ENCODE measurements at regions of chr1 and their contacts with region 1.

Region 1: GRCh38 chr1:85607126-85607912 is 26.8 kb downstream of the CCN1 start:
- DNase-seq: peak; percentile 95 to 100
- H3K4me3 ChIP-seq: peak overlapping the region; percentile 13; the same call in 1 of the 2 replicates
- H3K27ac ChIP-seq: peak overlapping the region; percentile 85
- H3K4me1 ChIP-seq: peaks cover 58% of the 10 kb centered on the region
- H3K27me3 ChIP-seq: no peaks in the 10 kb centered on the region
- CTCF ChIP-seq: no peak

Region 2: GRCh38 chr1:85276215-85276977 is 330.9 kb before region 1 on chr1 and contains the start of gene BCL10:
- CTCF ChIA-PET with region 1: no interaction called
- POLR2A ChIA-PET with region 1: no interaction called
- intact Hi-C with region 1: loop called (anchors 1 kb)
- DNase-seq: peak; percentile 98 to 99
- H3K4me3 ChIP-seq: peak within 1 kb of the TSS; percentile 92
- H3K27ac ChIP-seq: peak within 1 kb of the TSS; percentile 86
- H3K4me1 ChIP-seq: peaks cover 54% of the 10 kb centered on the region
- H3K27me3 ChIP-seq: no peaks in the 10 kb centered on the region
- CTCF ChIP-seq: no peak
- total RNA-seq, gene BCL10: 30.4 and 32.0 TPM in 2 replicates

Region 3: GRCh38 chr1:85328713-85329376 is 278.5 kb before region 1 on chr1:
- CTCF ChIA-PET with region 1: no interaction called
- POLR2A ChIA-PET with region 1: interaction called, 3 read pairs
- intact Hi-C with region 1: loop called (anchors 1 kb)
- DNase-seq: peak; percentile 73 to 99
- H3K4me3 ChIP-seq: no peak overlapping the region
- H3K27ac ChIP-seq: peak overlapping the region; percentile 68
- H3K4me1 ChIP-seq: peaks cover 52% of the 10 kb centered on the region
- H3K27me3 ChIP-seq: no peaks in the 10 kb centered on the region
- CTCF ChIP-seq: no peak

Region 4: GRCh38 chr1:85555867-85556573 is 51.3 kb before region 1 on chr1:
- CTCF ChIA-PET with region 1: no interaction called
- POLR2A ChIA-PET with region 1: no interaction called
- intact Hi-C with region 1: no loop called
- DNase-seq: no peak
- H3K4me3 ChIP-seq: no peak overlapping the region
- H3K27ac ChIP-seq: no peak overlapping the region
- H3K4me1 ChIP-seq: peaks cover 20% of the 10 kb centered on the region
- H3K27me3 ChIP-seq: no peaks in the 10 kb centered on the region
- CTCF ChIP-seq: no peak

Region 5: DNA sequence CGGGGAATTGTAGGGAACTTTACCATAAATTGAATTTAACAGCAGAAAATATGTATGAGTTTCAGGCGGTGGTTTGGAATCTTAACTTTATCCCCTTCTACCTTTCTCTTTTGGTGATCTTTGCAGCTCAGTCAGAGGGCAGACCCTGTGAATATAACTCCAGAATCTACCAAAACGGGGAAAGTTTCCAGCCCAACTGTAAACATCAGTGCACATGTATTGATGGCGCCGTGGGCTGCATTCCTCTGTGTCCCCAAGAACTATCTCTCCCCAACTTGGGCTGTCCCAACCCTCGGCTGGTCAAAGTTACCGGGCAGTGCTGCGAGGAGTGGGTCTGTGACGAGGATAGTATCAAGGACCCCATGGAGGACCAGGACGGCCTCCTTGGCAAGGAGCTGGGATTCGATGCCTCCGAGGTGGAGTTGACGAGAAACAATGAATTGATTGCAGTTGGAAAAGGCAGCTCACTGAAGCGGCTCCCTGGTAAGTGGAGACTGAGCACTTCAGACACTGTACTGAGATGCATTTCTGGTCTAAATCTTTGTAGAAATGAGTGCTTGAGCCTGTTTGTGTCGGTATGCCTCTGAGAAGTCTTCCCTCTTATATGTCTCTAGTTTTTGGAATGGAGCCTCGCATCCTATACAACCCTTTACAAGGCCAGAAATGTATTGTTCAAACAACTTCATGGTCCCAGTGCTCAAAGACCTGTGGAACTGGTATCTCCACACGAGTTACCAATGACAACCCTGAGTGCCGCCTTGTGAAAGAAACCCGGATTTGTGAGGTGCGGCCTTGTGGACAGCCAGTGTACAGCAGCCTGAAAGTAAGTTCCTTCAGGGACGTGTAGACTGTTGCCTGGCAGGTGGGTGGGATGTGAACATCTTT is 25.3 kb before region 1 on chr1:
- CTCF ChIA-PET with region 1: interaction called, 5 read pairs
- POLR2A ChIA-PET with region 1: interaction called, 23 read pairs
- intact Hi-C with region 1: loop called (anchors 1 kb)
- DNase-seq: peak; percentile 70 to 94
- H3K4me3 ChIP-seq: peak overlapping the region; percentile 65
- H3K27ac ChIP-seq: peak overlapping the region; percentile 86
- H3K4me1 ChIP-seq: peaks cover 51% of the 10 kb centered on the region
- H3K27me3 ChIP-seq: no peaks in the 10 kb centered on the region
- CTCF ChIP-seq: peak; percentile 70

Region 6: GRCh38 chr1:85681087-85681486 is 73.8 kb after region 1 on chr1:
- CTCF ChIA-PET with region 1: no interaction called
- POLR2A ChIA-PET with region 1: no interaction called
- intact Hi-C with region 1: no loop called
- DNase-seq: peak in 1 of 2 experiments; percentile 69
- H3K4me3 ChIP-seq: no peak overlapping the region
- H3K27ac ChIP-seq: no peak overlapping the region
- H3K4me1 ChIP-seq: no peaks in the 10 kb centered on the region
- H3K27me3 ChIP-seq: no peaks in the 10 kb centered on the region
- CTCF ChIP-seq: no peak

Region 7: DNA sequence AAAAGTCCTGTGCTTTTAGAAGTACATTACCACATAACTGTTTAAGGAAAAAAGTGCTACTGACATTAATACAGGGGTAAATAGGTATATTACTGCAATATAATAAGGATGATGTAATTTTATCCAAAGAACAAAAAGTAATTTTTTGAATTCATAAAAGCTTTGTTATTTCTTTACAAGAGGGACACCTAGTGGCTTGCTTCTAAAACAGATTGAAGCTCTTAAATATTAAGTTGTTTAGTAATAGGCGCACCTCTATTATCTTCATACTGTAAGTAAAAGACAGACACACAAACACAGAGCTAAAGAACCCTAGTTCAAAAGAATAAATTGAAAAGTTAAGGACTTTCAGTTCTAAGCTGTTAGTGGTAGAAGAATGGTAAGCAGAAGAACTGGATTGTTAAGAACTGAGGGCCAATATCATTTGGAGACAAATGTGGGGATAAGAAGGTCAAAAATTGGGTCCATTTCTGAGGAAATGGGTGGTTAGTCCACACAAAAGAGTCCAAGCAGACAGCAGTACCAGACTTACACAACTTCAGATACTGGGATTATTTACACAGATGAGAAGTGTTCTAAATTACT is 85.5 kb after region 1 on chr1:
- CTCF ChIA-PET with region 1: interaction called, 10 read pairs
- POLR2A ChIA-PET with region 1: interaction called, 8 read pairs
- intact Hi-C with region 1: loop called (anchors 2 kb)
- DNase-seq: peak in 1 of 2 experiments; percentile 67
- H3K4me3 ChIP-seq: no peak overlapping the region
- H3K27ac ChIP-seq: peak overlapping the region; percentile 35
- H3K4me1 ChIP-seq: peaks cover 3% of the 10 kb centered on the region; the same call in 1 of the 2 replicates
- H3K27me3 ChIP-seq: no peaks in the 10 kb centered on the region
- CTCF ChIP-seq: peak; percentile 86

Region 8: GRCh38 chr1:85850238-85850637 is 242.9 kb after region 1 on chr1:
- CTCF ChIA-PET with region 1: no interaction called
- POLR2A ChIA-PET with region 1: no interaction called
- intact Hi-C with region 1: loop called (anchors 1 kb)
- DNase-seq: peak; percentile 17 to 97
- H3K4me3 ChIP-seq: no peak overlapping the region
- H3K27ac ChIP-seq: peak overlapping the region; percentile 61
- H3K4me1 ChIP-seq: peaks cover 29% of the 10 kb centered on the region
- H3K27me3 ChIP-seq: no peaks in the 10 kb centered on the region
- CTCF ChIP-seq: peak; percentile 57

Measured in PC-9 (cell line).